OCI-LY7 (cell line): ENCODE measurements at regions of chr7 and their contacts with region 1.

Region 1: DNA sequence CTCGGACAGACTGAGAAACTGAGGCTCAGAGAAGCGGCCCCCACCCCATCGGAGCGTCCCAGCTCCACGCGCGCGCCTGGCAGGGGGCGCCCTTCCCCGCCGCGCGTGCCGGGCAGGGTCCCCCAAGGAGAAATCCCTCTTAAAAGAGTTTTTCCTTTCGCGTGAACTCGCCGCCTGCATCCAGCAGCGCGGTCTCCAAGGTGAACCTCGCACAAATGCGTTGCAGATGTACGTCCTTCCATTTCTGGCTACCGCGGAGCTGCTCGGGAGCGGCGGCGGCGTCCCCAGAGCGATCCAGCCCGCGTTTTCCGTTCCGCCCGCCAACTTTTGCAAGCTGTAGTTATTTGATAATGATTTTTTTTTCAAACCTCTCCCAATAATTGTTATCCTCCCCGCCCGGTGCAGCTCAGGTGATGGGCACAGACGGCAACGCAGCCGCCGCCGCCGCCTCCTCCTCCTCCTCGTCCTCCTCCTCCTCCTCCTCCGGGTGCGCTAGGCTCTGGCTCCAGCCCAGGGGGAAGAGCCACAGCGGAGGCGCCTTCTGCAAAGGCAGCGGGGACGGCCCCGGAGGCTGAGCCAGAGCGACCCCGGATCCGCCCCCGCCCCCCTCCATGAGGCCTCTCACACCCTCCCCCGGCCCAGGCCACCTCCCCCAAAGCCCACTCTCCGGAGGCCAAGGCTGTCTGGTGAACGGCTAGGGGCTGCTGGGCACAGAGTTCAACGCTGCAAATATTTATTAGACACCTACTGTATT is 74.0 kb upstream of the CUX1 start:
- DNase-seq: peak; percentile 84
- H3K4me3 ChIP-seq: peak overlapping the region; percentile 76
- H3K27ac ChIP-seq: peak overlapping the region; percentile 93
- H3K4me1 ChIP-seq: peaks cover 80% of the 10 kb centered on the region
- CTCF ChIP-seq: peak; percentile 83

Region 2: GRCh38 chr7:101664436-101664835 is 79.0 kb before region 1 on chr7:
- CTCF ChIA-PET with region 1: no interaction called
- POLR2A ChIA-PET with region 1: no interaction called
- intact Hi-C with region 1: no loop called
- DNase-seq: no peak
- H3K4me3 ChIP-seq: no peak overlapping the region
- H3K27ac ChIP-seq: no peak overlapping the region
- H3K4me1 ChIP-seq: no peaks in the 10 kb centered on the region
- CTCF ChIP-seq: no peak

Region 3: GRCh38 chr7:101804967-101805366 is 61.5 kb after region 1 on chr7:
- CTCF ChIA-PET with region 1: interaction called, 11 read pairs
- POLR2A ChIA-PET with region 1: interaction called, 177 read pairs
- intact Hi-C with region 1: no loop called
- DNase-seq: peak; percentile 72
- H3K4me3 ChIP-seq: peak overlapping the region; percentile 51
- H3K27ac ChIP-seq: peak overlapping the region; percentile 80
- H3K4me1 ChIP-seq: peaks cover 78% of the 10 kb centered on the region
- CTCF ChIP-seq: peak; percentile 71

Region 4: DNA sequence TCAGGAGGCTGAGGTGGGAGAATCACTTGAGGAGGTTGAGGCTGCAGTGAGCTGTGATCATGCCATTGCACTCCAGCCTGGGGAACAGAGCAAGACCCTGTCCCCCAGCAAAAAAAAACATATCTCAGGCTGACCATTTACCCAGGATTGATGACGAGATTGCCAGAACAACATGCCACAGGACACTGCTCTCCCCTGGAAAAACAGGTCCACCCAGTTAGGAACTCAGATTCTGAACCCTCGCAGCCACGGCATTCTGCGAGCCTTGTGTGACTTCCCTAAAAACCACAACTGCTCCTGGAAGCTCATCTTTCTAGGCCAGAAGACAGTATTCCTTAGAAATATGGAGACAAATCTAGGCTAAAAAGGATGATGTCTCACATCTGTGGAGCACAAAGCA is 501.2 kb after region 1 on chr7:
- CTCF ChIA-PET with region 1: no interaction called
- POLR2A ChIA-PET with region 1: no interaction called
- intact Hi-C with region 1: loop called (anchors 2 kb)
- DNase-seq: no peak
- H3K4me3 ChIP-seq: no peak overlapping the region
- H3K27ac ChIP-seq: no peak overlapping the region
- H3K4me1 ChIP-seq: peaks cover 10% of the 10 kb centered on the region
- CTCF ChIP-seq: no peak